Ovary (tissue), 10 donors: ENCODE measurements at regions of chr14 and their contacts with region 1.

Region 1: DNA sequence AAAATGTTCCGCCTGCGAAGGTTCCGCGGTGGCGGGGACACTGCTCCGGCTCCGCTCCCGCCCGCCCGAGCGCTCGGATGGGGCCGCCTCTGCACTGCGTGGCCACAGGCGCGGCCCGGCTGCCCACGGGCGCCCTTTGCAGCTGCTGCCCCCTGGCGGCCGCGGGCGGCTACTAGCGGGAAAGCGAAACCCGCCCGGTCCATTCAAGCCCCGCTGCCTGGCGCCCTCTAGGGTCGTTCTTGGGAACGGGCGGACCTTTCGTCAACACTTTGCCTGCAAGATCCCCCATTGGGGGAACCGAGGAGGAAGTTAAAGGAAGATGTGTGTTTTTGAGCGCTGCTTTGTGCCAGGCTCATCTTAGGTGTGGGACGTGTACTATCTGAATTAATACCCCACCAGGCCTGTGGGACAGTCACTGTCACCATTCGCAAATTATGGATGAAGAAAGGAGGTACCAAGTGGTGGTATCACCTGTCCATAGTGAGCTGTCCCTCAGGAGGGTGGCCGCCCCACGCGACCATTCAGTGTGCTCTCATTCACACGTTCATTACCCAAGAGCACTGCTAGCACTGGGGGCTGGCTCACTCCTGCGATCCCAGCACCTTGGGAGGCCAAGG is 19.4 kb downstream of the GPR132 start:
- DNase-seq: peak; percentile 79 to 92 (median 91)
- H3K4me3 ChIP-seq: no peak overlapping the region
- H3K27ac ChIP-seq: no peak overlapping the region
- H3K4me1 ChIP-seq: no peaks in the 10 kb centered on the region
- H3K27me3 ChIP-seq: no peaks in the 10 kb centered on the region
- CTCF ChIP-seq: peak; percentile 97 to 100 (median 99)
- EP300 ChIP-seq: no peak
- POLR2A ChIP-seq: no peak

Region 2: GRCh38 chr14:104895786-104896661 is 149.8 kb before region 1 on chr14:
- intact Hi-C with region 1: loop called (anchors 2 to 5 kb)
- DNase-seq: peak; percentile 18 to 43 (median 29)
- H3K4me3 ChIP-seq: no peak overlapping the region
- H3K27ac ChIP-seq: no peak overlapping the region
- H3K4me1 ChIP-seq: no peaks in the 10 kb centered on the region
- H3K27me3 ChIP-seq: no peaks in the 10 kb centered on the region
- CTCF ChIP-seq: no peak
- EP300 ChIP-seq: no peak
- POLR2A ChIP-seq: no peak

Region 3: DNA sequence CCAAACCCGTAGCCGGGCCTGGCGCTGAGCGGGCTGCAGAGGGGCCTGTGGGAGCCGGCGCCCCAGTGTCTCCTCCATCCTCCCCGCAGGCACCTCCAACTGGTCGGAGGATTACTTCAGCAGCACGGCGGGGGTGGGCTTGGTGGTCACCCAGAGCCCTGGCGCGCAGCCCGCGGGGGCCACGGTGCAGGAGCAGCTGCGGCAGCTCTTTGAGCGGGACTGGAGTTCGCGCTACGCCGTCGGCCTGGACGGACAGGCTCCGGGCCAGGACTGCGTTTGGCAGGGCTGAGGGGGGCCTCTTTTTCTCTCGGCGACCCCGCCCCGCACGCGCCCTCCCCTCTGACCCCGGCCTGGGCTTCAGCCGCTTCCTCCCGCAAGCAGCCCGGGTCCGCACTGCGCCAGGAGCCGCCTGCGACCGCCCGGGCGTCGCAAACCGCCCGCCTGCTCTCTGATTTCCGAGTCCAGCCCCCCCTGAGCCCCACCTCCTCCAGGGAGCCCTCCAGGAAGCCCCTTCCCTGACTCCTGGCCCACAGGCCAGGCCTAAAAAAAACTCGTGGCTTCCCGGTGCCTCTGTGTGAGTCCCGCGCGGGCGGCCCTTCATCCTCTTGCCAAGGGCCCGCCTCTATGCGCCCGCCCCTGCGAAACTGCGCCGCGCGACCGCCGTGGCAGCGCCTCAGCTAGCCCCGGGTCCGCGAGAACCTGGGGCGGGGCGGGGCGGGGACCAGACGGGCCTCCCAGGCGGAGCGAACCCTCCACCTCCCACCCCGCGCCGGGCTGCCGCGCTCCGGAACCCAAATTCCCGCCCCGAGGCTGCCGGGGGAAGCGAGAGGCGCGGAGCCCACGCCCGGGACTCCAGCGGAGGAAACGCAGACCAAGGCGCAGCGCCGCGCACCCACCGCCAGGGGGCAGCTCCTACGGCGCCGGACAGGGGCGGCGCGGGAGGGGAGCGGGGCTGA is 112.9 kb before region 1 on chr14:
- intact Hi-C with region 1: loop called in 2 of 4 experiments (anchors 10 kb)
- DNase-seq: peak; percentile 79 to 91 (median 87)
- H3K4me3 ChIP-seq: peak overlapping the region; percentile 59
- H3K27ac ChIP-seq: peak overlapping the region in 1 of 2 donors; percentile 16
- H3K4me1 ChIP-seq: peaks cover 4% of the 10 kb centered on the region
- H3K27me3 ChIP-seq: no peaks in the 10 kb centered on the region
- CTCF ChIP-seq: peak; percentile 41 to 81 (median 76)
- EP300 ChIP-seq: no peak
- POLR2A ChIP-seq: no peak

Region 4: GRCh38 chr14:104976198-104977007 is 69.4 kb before region 1 on chr14:
- intact Hi-C with region 1: loop called in 3 of 4 experiments (anchors 5 to 10 kb)
- DNase-seq: peak; percentile 61 to 83 (median 74)
- H3K4me3 ChIP-seq: no peak overlapping the region
- H3K27ac ChIP-seq: no peak overlapping the region
- H3K4me1 ChIP-seq: peaks cover 29% of the 10 kb centered on the region
- H3K27me3 ChIP-seq: no peaks in the 10 kb centered on the region
- CTCF ChIP-seq: peak; percentile 42 to 65 (median 60)
- EP300 ChIP-seq: no peak
- POLR2A ChIP-seq: no peak

Region 5: GRCh38 chr14:105192866-105193731 is 147.3 kb after region 1 on chr14:
- intact Hi-C with region 1: no loop called
- DNase-seq: no peak
- H3K4me3 ChIP-seq: no peak overlapping the region
- H3K27ac ChIP-seq: no peak overlapping the region
- H3K4me1 ChIP-seq: no peaks in the 10 kb centered on the region
- H3K27me3 ChIP-seq: no peaks in the 10 kb centered on the region
- CTCF ChIP-seq: no peak
- EP300 ChIP-seq: no peak
- POLR2A ChIP-seq: no peak

Region 6: GRCh38 chr14:105330491-105330895 is 284.7 kb after region 1 on chr14:
- intact Hi-C with region 1: no loop called
- DNase-seq: no peak
- H3K4me3 ChIP-seq: no peak overlapping the region
- H3K27ac ChIP-seq: no peak overlapping the region
- H3K4me1 ChIP-seq: peaks cover 21% of the 10 kb centered on the region
- H3K27me3 ChIP-seq: no peaks in the 10 kb centered on the region
- CTCF ChIP-seq: no peak
- EP300 ChIP-seq: no peak
- POLR2A ChIP-seq: no peak